Natural killer cell (primary cell): ENCODE measurements at regions of chr9 and their contacts with region 1.

Region 1: DNA sequence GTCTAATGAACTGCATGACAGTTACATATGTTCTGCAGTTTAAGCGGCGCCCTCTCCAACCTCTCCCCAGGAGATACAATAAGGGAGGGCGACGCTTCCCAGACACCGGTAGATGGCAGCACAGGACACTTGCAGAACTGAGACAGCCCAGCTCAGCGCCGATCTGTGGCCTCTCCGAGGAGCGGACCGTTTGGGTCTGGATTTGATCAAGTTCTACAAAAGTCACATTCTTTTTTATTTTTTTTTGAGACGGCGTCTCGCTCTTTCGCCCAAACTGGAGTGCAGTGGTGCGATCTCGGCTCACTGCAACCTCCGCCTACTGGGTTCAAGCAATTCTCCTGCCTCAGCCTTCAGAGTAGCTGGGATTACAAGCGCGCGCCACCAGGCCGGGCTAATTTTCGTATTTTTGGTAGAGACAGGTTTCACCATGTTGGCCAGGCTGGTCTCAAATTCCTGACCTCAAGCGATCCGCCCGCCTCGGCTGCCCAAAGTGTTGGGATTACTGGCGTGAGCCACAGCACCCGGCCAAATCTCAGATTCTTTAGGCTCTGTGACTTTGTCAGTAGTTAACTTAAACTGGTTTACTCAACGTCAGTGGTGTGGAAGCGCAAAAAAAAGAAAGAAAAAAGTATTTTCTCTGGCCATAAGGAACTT is 1.4 kb upstream of the ATOSB start:
- DNase-seq: peak; percentile 73 to 97
- ATAC-seq: peak; percentile 51 to 84 (median 66)
- H3K4me3 ChIP-seq: peak overlapping the region; percentile 67
- H3K4me3 Mint-ChIP-seq: peak overlapping the region; percentile 97
- H3K27ac ChIP-seq: peak overlapping the region; percentile 79
- H3K27ac Mint-ChIP-seq: peak overlapping the region; percentile 92 to 95
- H3K4me1 ChIP-seq: peaks cover 41% of the 10 kb centered on the region
- H3K4me1 Mint-ChIP-seq: peaks cover 38 to 45% of the 10 kb centered on the region in 2 donors
- H3K27me3 ChIP-seq: no peaks in the 10 kb centered on the region
- H3K27me3 Mint-ChIP-seq: peaks cover 0 to 9% of the 10 kb centered on the region in 2 donors
- CTCF ChIP-seq: peak; percentile 96

Region 2: GRCh38 chr9:34025062-34025461 is 1092.0 kb before region 1 on chr9:
- intact Hi-C with region 1: no loop called
- DNase-seq: no peak
- ATAC-seq: no peak
- H3K4me3 ChIP-seq: no peak overlapping the region
- H3K4me3 Mint-ChIP-seq: no peak overlapping the region
- H3K27ac ChIP-seq: no peak overlapping the region
- H3K27ac Mint-ChIP-seq: peak overlapping the region in 1 of 2 donors; percentile 8
- H3K4me1 ChIP-seq: no peaks in the 10 kb centered on the region
- H3K4me1 Mint-ChIP-seq: peaks cover 9 to 14% of the 10 kb centered on the region in 2 donors
- H3K27me3 ChIP-seq: no peaks in the 10 kb centered on the region
- H3K27me3 Mint-ChIP-seq: no peaks in the 10 kb centered on the region
- CTCF ChIP-seq: no peak

Region 3: GRCh38 chr9:35071814-35072460 is 45.1 kb before region 1 on chr9:
- intact Hi-C with region 1: loop called (anchors 1 kb)
- DNase-seq: peak; percentile 82 to 83
- ATAC-seq: peak; percentile 67 to 85 (median 73)
- H3K4me3 ChIP-seq: peak overlapping the region; percentile 74
- H3K4me3 Mint-ChIP-seq: peak overlapping the region; percentile 88
- H3K27ac ChIP-seq: peak overlapping the region; percentile 96
- H3K27ac Mint-ChIP-seq: peak overlapping the region; percentile 88 to 94
- H3K4me1 ChIP-seq: peaks cover 42% of the 10 kb centered on the region
- H3K4me1 Mint-ChIP-seq: peaks cover 52 to 57% of the 10 kb centered on the region in 2 donors
- H3K27me3 ChIP-seq: no peaks in the 10 kb centered on the region
- H3K27me3 Mint-ChIP-seq: no peaks in the 10 kb centered on the region
- CTCF ChIP-seq: peak; percentile 34

Region 4: DNA sequence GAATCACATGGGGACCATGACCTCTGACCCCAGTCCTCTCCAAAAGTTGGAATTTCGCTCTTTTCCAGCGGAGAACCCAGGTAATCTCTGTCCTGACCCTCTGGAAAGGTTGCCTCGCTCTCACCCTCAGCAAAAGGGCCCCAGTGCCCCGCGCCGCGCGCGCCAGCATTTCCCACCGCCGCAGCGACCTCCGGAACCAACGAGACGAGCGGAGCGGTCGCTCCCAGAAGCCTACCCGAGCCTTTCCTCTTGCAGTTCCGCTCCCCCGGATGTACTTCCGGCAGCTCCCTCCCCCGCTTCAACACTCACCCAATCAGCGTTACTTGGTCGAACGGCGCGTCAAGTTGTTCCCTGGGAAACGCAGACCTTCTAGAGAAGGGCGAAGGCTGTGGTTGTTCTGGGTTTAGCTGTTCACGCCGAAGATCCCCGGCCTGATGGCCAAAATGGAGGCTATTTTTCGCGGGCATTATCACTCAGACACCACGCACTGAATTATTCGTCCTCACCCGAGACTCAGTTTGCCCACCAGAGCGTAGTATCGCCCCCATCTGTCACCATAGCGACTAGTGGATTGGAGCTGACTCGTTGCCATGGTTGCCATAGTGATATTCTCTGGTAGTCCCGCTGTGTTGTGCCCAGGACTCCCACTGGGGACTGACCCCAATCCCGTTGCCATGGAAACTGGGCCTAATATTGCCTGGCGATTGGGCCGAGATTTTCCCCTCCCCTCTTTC is 13.9 kb before region 1 on chr9 and contains the start of gene STOML2:
- intact Hi-C with region 1: loop called (anchors 1 kb)
- DNase-seq: peak; percentile 84 to 97
- ATAC-seq: peak; percentile 96 to 98 (median 98)
- H3K4me3 ChIP-seq: peak within 1 kb of the TSS; percentile 93
- H3K4me3 Mint-ChIP-seq: peak within 1 kb of the TSS; percentile 99
- H3K27ac ChIP-seq: peak within 1 kb of the TSS; percentile 95
- H3K27ac Mint-ChIP-seq: peak within 1 kb of the TSS; percentile 94 to 97
- H3K4me1 ChIP-seq: peaks cover 19% of the 10 kb centered on the region
- H3K4me1 Mint-ChIP-seq: peaks cover 30 to 31% of the 10 kb centered on the region in 2 donors
- H3K27me3 ChIP-seq: no peaks in the 10 kb centered on the region
- H3K27me3 Mint-ChIP-seq: no peaks in the 10 kb centered on the region
- CTCF ChIP-seq: no peak
- total RNA-seq, gene STOML2: 41.4 to 43.9 (median 41.6) TPM

Region 5: DNA sequence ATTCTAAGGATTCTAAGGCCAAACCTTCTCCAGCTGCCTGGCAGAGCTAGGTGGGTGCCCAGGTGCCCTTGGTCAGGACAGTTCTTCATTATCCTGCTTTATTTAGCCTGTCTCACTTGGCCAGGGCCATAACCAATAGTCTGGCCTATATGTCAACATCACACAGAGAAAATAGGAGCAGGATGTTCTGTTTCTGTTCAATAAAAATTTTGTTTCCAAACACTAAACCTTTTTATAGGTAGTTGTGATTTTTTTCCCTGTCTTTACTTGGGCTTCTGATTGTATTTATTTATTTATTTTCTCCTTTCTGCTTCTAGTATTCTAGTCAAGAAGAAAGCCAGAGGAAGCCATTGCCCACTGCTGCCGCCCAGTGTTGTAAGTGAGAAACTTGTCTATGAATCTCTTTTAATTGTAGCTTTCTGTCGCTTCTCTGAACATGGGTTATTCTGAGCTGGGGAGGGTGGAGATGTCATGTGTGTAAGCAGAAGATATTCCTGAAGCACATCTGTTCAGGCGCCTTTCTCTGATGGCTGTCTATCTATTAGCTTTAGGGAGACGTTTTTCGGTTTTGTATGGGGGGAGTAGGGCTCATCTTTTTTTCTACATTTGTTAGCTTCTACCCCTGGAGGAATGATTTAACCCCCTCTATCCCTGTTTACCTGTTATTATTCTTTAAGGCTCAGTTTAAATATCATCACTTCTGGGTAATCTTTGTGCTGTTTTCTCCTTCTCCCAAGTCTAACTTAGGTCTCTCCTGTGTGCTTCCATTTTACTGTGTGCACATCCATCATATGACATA is 141.8 kb after region 1 on chr9:
- intact Hi-C with region 1: loop called (anchors 1 kb)
- DNase-seq: peak in 1 of 2 donors; percentile 66
- ATAC-seq: peak in 2 of 3 donors; percentile 52 to 62
- H3K4me3 ChIP-seq: no peak overlapping the region
- H3K4me3 Mint-ChIP-seq: no peak overlapping the region
- H3K27ac ChIP-seq: no peak overlapping the region
- H3K27ac Mint-ChIP-seq: no peak overlapping the region
- H3K4me1 ChIP-seq: no peaks in the 10 kb centered on the region
- H3K4me1 Mint-ChIP-seq: no peaks in the 10 kb centered on the region
- H3K27me3 ChIP-seq: no peaks in the 10 kb centered on the region
- H3K27me3 Mint-ChIP-seq: peaks cover 7 to 9% of the 10 kb centered on the region in 2 donors
- CTCF ChIP-seq: peak; percentile 50

Region 6: GRCh38 chr9:35553670-35554543 is 436.9 kb after region 1 on chr9:
- intact Hi-C with region 1: loop called (anchors 1 kb)
- DNase-seq: peak in 1 of 2 donors; percentile 57
- ATAC-seq: peak in 2 of 3 donors; percentile 70 to 73
- H3K4me3 ChIP-seq: no peak overlapping the region
- H3K4me3 Mint-ChIP-seq: no peak overlapping the region
- H3K27ac ChIP-seq: no peak overlapping the region
- H3K27ac Mint-ChIP-seq: no peak overlapping the region
- H3K4me1 ChIP-seq: no peaks in the 10 kb centered on the region
- H3K4me1 Mint-ChIP-seq: peaks cover 0 to 8% of the 10 kb centered on the region in 2 donors
- H3K27me3 ChIP-seq: no peaks in the 10 kb centered on the region
- H3K27me3 Mint-ChIP-seq: peaks cover 0 to 3% of the 10 kb centered on the region in 2 donors
- CTCF ChIP-seq: peak; percentile 32

Region 7: DNA sequence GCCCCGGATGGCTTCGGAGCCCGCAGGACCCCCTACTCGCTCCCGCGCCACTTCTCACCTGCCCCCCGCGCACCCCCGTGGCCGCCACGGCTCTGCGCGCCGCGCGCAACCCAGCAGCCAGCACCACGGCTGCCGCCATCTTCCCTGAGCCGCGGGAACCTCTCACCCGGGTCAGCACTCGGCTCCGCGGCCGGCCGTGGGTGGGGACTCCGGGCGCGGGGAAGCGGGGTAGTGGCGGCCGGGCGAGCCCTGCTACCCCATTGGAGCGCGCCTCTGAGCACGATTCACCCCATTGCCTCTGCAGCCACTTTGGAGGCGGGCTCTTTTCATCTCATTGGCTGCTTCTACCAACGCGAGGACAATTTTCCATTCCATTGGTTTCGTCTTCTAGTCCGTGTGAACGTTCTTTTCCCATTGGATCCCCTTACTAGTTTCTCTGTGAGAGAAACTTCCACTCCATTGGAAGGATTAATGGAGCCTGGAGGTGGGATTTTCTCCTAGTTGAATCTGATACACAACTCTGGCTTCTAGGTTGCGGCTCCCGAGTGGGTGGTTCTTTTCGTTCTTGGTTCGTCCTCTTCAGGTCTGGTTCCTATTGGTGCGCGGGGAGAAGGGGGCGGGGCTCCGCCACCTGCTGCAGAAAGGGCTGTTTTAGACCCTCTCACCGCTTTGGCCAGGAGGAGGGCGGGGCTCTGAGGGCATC is 698.0 kb after region 1 on chr9 and contains the start of gene HINT2:
- intact Hi-C with region 1: loop called (anchors 10 kb)
- DNase-seq: peak; percentile 96 to 98
- ATAC-seq: peak; percentile 78 to 91 (median 79)
- H3K4me3 ChIP-seq: peak within 1 kb of the TSS; percentile 73
- H3K4me3 Mint-ChIP-seq: peak within 1 kb of the TSS; percentile 98
- H3K27ac ChIP-seq: peak within 1 kb of the TSS; percentile 87
- H3K27ac Mint-ChIP-seq: peak within 1 kb of the TSS; percentile 96 to 98
- H3K4me1 ChIP-seq: peaks cover 38% of the 10 kb centered on the region
- H3K4me1 Mint-ChIP-seq: peaks cover 43 to 53% of the 10 kb centered on the region in 2 donors
- H3K27me3 ChIP-seq: no peaks in the 10 kb centered on the region
- H3K27me3 Mint-ChIP-seq: no peaks in the 10 kb centered on the region
- CTCF ChIP-seq: no peak
- total RNA-seq, gene HINT2: 25.8 to 27.5 (median 25.9) TPM